Esophagus muscularis mucosa (tissue), 4 donors: ENCODE measurements at regions of chr11 and their contacts with region 1.

Region 1: GRCh38 chr11:71080239-71081097 is 171.9 kb downstream of the SHANK2 start:
- DNase-seq: no peak
- H3K4me3 ChIP-seq: no peak overlapping the region
- H3K27ac ChIP-seq: no peak overlapping the region
- H3K4me1 ChIP-seq: peaks cover 0 to 4% (median 0%) of the 10 kb centered on the region in 4 donors
- H3K27me3 ChIP-seq: peaks cover 0 to 12% (median 0%) of the 10 kb centered on the region in 4 donors
- CTCF ChIP-seq: peak; percentile 62 to 76 (median 73)
- EP300 ChIP-seq: no peak
- POLR2A ChIP-seq: no peak

Region 2: DNA sequence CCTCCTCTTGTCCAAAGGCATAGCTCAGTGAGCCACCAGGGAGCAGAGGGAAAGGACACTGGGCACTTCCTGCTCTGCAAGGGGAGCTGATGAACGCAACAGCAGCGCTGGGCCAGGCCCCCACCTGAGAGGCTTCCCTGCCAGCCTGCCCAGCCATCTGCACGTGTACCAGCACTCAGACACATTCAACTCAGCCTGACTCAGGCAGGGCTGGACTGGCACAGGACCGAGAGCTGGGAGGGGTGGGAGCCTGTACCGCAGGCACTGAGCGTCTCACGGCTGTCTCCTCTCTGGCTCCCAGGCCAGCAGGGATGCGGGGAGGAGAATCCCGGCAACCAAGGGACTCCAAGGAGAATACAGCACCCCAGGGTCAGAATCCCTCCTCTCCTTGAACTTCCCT is 270.3 kb before region 1 on chr11:
- intact Hi-C with region 1: loop called (anchors 5 kb)
- DNase-seq: no peak
- H3K4me3 ChIP-seq: no peak overlapping the region
- H3K27ac ChIP-seq: no peak overlapping the region
- H3K4me1 ChIP-seq: no peaks in the 10 kb centered on the region
- H3K27me3 ChIP-seq: no peaks in the 10 kb centered on the region
- CTCF ChIP-seq: no peak
- EP300 ChIP-seq: no peak
- POLR2A ChIP-seq: no peak